ENCODE measurements at regions of chr10 and their contacts with region 1.

Region 1: GRCh38 chr10:132627666-132628531 is 90.3 kb downstream of the INPP5A start:
- DNase-seq: peak; percentile 53 to 55
- ATAC-seq: peak; percentile 5 to 37 (median 16)
- H3K4me3 ChIP-seq: peak overlapping the region in 6 of 10 donors; percentile 10 to 35 (median 28)
- H3K27ac ChIP-seq: peak overlapping the region; percentile 76 to 97 (median 86)
- H3K4me1 ChIP-seq: peaks cover 49 to 81% (median 73%) of the 10 kb centered on the region in 9 donors
- H3K27me3 ChIP-seq: no peaks in the 10 kb centered on the region
- CTCF ChIP-seq: no peak

Region 2: GRCh38 chr10:131997366-131998049 is 630.4 kb before region 1 on chr10:
- intact Hi-C with region 1: no loop called
- DNase-seq: peak; percentile 37 to 59
- ATAC-seq: peak in 7 of 8 donors; percentile 48 to 79 (median 65)
- H3K4me3 ChIP-seq: peak overlapping the region in 1 of 10 donors; percentile 1
- H3K27ac ChIP-seq: peak overlapping the region; percentile 42 to 82 (median 71)
- H3K4me1 ChIP-seq: peaks cover 14 to 45% (median 28%) of the 10 kb centered on the region in 9 donors
- H3K27me3 ChIP-seq: no peaks in the 10 kb centered on the region
- CTCF ChIP-seq: no peak

Region 3: GRCh38 chr10:132404908-132405462 is 222.9 kb before region 1 on chr10:
- intact Hi-C with region 1: no loop called
- DNase-seq: no peak
- ATAC-seq: no peak
- H3K4me3 ChIP-seq: no peak overlapping the region
- H3K27ac ChIP-seq: no peak overlapping the region
- H3K4me1 ChIP-seq: peaks cover 20 to 54% (median 39%) of the 10 kb centered on the region in 9 donors
- H3K27me3 ChIP-seq: no peaks in the 10 kb centered on the region
- CTCF ChIP-seq: no peak

Region 4: GRCh38 chr10:132588301-132589013 is 39.4 kb before region 1 on chr10:
- intact Hi-C with region 1: loop called in 6 of 10 experiments (anchors 2 to 5 kb)
- DNase-seq: peak; percentile 61 to 84
- ATAC-seq: peak; percentile 47 to 83 (median 75)
- H3K4me3 ChIP-seq: peak overlapping the region in 8 of 10 donors; percentile 17 to 29 (median 24)
- H3K27ac ChIP-seq: peak overlapping the region; percentile 64 to 91 (median 80)
- H3K4me1 ChIP-seq: peaks cover 56 to 100% (median 94%) of the 10 kb centered on the region in 9 donors
- H3K27me3 ChIP-seq: no peaks in the 10 kb centered on the region
- CTCF ChIP-seq: no peak

Region 5: DNA sequence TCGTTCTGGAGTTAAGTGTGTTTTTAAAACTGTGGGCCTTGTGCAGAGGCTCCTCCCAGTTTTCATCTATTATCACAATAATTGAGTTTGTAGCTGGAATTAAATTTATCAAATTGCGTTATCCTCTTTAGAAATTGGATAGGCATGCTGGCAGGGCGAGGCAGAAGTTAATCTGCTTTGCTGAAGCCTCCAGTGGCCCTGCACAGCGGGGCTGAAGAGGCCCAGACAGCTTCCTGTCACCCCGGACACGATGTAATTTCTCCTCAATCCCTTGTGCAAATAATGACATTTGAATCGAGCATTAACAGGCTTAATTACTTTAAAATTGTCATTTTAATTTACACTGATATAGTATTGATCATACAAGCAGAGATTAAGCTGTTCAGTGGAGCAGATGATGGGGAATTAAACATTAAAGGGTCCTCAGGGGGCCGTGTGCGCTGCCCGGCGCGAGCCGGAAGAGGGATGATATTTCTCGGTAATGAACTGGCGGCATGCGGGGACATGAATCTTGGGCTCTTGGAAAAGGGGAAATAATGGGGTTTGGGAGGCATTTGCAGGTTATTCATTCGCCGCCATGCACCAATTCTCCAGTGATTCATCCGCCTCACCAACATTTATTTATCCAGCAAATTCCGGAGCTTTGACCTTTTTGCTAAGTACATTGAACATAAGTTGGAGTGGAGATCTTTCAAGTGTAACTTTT is 39.6 kb after region 1 on chr10:
- intact Hi-C with region 1: no loop called
- DNase-seq: no peak
- ATAC-seq: no peak
- H3K4me3 ChIP-seq: no peak overlapping the region
- H3K27ac ChIP-seq: no peak overlapping the region
- H3K4me1 ChIP-seq: peaks cover 0 to 9% (median 0%) of the 10 kb centered on the region in 9 donors
- H3K27me3 ChIP-seq: no peaks in the 10 kb centered on the region
- CTCF ChIP-seq: no peak

Region 6: GRCh38 chr10:132722394-132723329 is 94.8 kb after region 1 on chr10:
- intact Hi-C with region 1: no loop called
- DNase-seq: peak in 1 of 2 donors; percentile 36
- ATAC-seq: peak; percentile 77 to 97 (median 89)
- H3K4me3 ChIP-seq: peak overlapping the region in 1 of 10 donors; percentile 3
- H3K27ac ChIP-seq: peak overlapping the region in 4 of 10 donors; percentile 9 to 55 (median 50)
- H3K4me1 ChIP-seq: peaks cover 0 to 17% (median 0%) of the 10 kb centered on the region in 9 donors
- H3K27me3 ChIP-seq: no peaks in the 10 kb centered on the region
- CTCF ChIP-seq: peak in 7 of 9 donors; percentile 5 to 38 (median 17)

Measured in heart right ventricle (tissue), 16 donors.